ENCODE measurements at regions of chr21 and their contacts with region 1.

Region 1: DNA sequence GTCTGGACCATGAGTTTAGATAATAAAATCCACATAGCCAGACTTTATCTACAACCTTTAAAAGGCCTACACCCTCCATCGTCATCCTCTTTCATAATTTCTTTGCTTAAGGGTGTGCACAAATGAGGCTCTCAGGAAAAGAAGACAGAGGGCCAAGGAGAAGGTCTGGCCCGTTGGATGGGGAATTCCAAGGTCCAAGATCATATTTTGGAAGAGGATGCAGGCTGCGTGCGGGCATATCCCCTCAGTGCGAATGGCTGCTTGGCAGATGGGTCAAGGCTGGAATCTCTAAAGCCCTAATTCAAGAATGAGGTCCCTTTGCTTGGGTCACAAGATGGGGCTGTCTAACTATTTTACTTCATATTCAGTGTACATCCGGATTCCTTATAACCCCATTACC is 782.2 kb upstream of the NCAM2 start:
- DNase-seq: no peak
- ATAC-seq: no peak
- H3K4me3 ChIP-seq: no peak overlapping the region
- H3K27ac ChIP-seq: no peak overlapping the region
- H3K4me1 ChIP-seq: no peaks in the 10 kb centered on the region
- H3K27me3 ChIP-seq: no peaks in the 10 kb centered on the region
- CTCF ChIP-seq: no peak

Region 2: GRCh38 chr21:20151741-20152140 is 64.2 kb before region 1 on chr21:
- intact Hi-C with region 1: no loop called
- DNase-seq: no peak
- ATAC-seq: no peak
- H3K4me3 ChIP-seq: no peak overlapping the region
- H3K27ac ChIP-seq: no peak overlapping the region
- H3K4me1 ChIP-seq: no peaks in the 10 kb centered on the region
- H3K27me3 ChIP-seq: no peaks in the 10 kb centered on the region
- CTCF ChIP-seq: no peak

Region 3: GRCh38 chr21:20257052-20257740 is 41.2 kb after region 1 on chr21:
- intact Hi-C with region 1: loop called in 1 of 2 experiments (anchors 1 kb)
- DNase-seq: no peak
- ATAC-seq: no peak
- H3K4me3 ChIP-seq: no peak overlapping the region
- H3K27ac ChIP-seq: no peak overlapping the region
- H3K4me1 ChIP-seq: no peaks in the 10 kb centered on the region
- H3K27me3 ChIP-seq: no peaks in the 10 kb centered on the region
- CTCF ChIP-seq: no peak

Measured in psoas muscle (tissue), 8 donors.